ENCODE measurements at regions of chr2 and their contacts with region 1.

Region 1: DNA sequence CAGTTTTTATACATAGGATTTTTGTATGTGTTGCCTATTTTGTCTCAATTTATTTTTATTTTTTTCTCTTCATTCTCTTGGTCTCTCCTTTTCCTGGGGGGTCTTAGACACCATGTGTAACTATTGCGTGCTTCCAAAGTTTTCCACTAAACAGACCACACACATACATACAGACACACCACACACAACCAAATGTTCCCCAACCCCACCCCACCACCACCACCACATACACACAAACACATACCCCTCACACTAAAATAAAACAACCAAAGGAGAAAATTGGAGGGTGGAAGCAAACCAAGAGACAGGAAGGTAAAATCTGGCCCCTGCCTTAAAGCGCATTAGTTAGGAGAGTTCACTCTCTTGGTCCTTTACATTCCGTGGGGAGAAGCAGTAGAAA is 30.0 kb upstream of the ANXA4 start:
- DNase-seq: no peak
- H3K4me3 ChIP-seq: no peak overlapping the region
- H3K27ac ChIP-seq: no peak overlapping the region
- H3K27me3 ChIP-seq: no peaks in the 10 kb centered on the region
- CTCF ChIP-seq: no peak

Region 2: GRCh38 chr2:69082430-69082997 is 629.5 kb before region 1 on chr2:
- intact Hi-C with region 1: no loop called
- DNase-seq: no peak
- H3K4me3 ChIP-seq: no peak overlapping the region
- H3K27ac ChIP-seq: peak overlapping the region in 27 of 59 donors; percentile 1 to 69 (median 27)
- H3K27me3 ChIP-seq: no peaks in the 10 kb centered on the region
- CTCF ChIP-seq: no peak

Region 3: DNA sequence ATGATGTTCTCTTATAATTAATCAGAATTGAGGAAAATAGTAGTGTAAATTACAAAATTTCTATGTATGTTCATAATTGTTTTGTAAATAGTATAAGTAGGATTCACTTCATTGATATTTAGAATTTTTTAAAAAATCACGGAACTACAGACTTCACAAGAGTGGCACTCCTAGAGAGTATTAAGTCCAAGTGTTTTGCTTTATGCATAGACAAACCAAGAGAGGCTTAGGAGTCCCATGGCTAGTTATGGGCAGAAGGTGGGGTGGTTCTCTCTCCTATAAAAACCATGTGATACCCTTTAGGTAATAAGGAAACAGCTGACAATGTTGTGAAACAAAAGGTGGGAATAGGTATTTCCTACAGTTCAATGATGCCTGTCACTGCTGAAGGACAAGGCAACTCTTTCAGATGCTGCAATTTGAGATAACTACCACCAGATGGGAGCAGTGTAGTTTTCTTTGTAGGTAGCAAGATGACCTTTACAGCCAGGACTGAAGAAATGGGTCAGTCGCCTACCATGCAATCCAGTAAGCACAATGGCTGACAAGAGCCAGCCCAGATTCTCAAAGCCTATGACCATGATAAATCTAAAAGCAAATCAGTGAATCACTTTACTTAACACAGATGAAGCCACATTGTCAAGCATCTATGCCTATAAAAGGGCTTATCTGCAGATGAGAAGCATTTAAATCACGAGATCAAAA is 152.4 kb before region 1 on chr2:
- intact Hi-C with region 1: loop called (anchors 2 to 10 kb)
- DNase-seq: no peak
- H3K4me3 ChIP-seq: no peak overlapping the region
- H3K27ac ChIP-seq: peak overlapping the region in 1 of 59 donors; percentile 13
- H3K27me3 ChIP-seq: no peaks in the 10 kb centered on the region
- CTCF ChIP-seq: peak in 55 of 56 donors; percentile 23 to 76 (median 61)